ENCODE measurements at regions of chr2 and their contacts with region 1.

Region 1: GRCh38 chr2:12716282-12717190 is at the start of gene TRIB2:
- DNase-seq: peak; percentile 60 to 71
- H3K4me3 ChIP-seq: peak within 1 kb of the TSS; percentile 39
- H3K4me3 Mint-ChIP-seq: peak within 1 kb of the TSS; percentile 71
- H3K27ac Mint-ChIP-seq: no peak within 1 kb of the TSS
- H3K4me1 ChIP-seq: 0 out of 2 replicates have a peak, but pooled peaks cover 5% of the 10 kb centered on the region
- H3K4me1 Mint-ChIP-seq: no peaks in the 10 kb centered on the region
- H3K27me3 ChIP-seq: peaks cover 4% of the 10 kb centered on the region
- H3K27me3 Mint-ChIP-seq: peaks cover 25% of the 10 kb centered on the region
- CTCF ChIP-seq: no peak
- total RNA-seq, gene TRIB2: 2.9 and 3.6 TPM in 2 replicates

Region 2: GRCh38 chr2:10993001-10993481 is 1723.5 kb before region 1 on chr2:
- CTCF ChIA-PET with region 1: no interaction called
- POLR2A ChIA-PET with region 1: no interaction called
- intact Hi-C with region 1: no loop called
- DNase-seq: no peak
- H3K4me3 ChIP-seq: no peak overlapping the region
- H3K4me3 Mint-ChIP-seq: no peak overlapping the region
- H3K27ac Mint-ChIP-seq: no peak overlapping the region
- H3K4me1 ChIP-seq: no peaks in the 10 kb centered on the region
- H3K4me1 Mint-ChIP-seq: no peaks in the 10 kb centered on the region
- H3K27me3 ChIP-seq: no peaks in the 10 kb centered on the region
- H3K27me3 Mint-ChIP-seq: peaks cover 2% of the 10 kb centered on the region
- CTCF ChIP-seq: no peak

Region 3: GRCh38 chr2:12433628-12433994 is 282.9 kb before region 1 on chr2:
- CTCF ChIA-PET with region 1: interaction called, 31 read pairs
- POLR2A ChIA-PET with region 1: no interaction called
- intact Hi-C with region 1: loop called (anchors 1 kb)
- DNase-seq: peak; percentile 41 to 49
- H3K4me3 ChIP-seq: no peak overlapping the region
- H3K4me3 Mint-ChIP-seq: no peak overlapping the region
- H3K27ac Mint-ChIP-seq: no peak overlapping the region
- H3K4me1 ChIP-seq: no peaks in the 10 kb centered on the region
- H3K4me1 Mint-ChIP-seq: no peaks in the 10 kb centered on the region
- H3K27me3 ChIP-seq: no peaks in the 10 kb centered on the region
- H3K27me3 Mint-ChIP-seq: peaks cover 4% of the 10 kb centered on the region
- CTCF ChIP-seq: peak in 1 of 2 experiments; percentile 53

Region 4: GRCh38 chr2:12514631-12515433 is 201.7 kb before region 1 on chr2:
- CTCF ChIA-PET with region 1: interaction called, 5 read pairs
- POLR2A ChIA-PET with region 1: no interaction called
- intact Hi-C with region 1: loop called (anchors 1 kb)
- DNase-seq: peak; percentile 49 to 58
- H3K4me3 ChIP-seq: no peak overlapping the region
- H3K4me3 Mint-ChIP-seq: peak overlapping the region; percentile 20
- H3K27ac Mint-ChIP-seq: no peak overlapping the region
- H3K4me1 ChIP-seq: peaks cover 27% of the 10 kb centered on the region
- H3K4me1 Mint-ChIP-seq: peaks cover 25% of the 10 kb centered on the region
- H3K27me3 ChIP-seq: no peaks in the 10 kb centered on the region
- H3K27me3 Mint-ChIP-seq: peaks cover 5% of the 10 kb centered on the region
- CTCF ChIP-seq: no peak

Region 5: DNA sequence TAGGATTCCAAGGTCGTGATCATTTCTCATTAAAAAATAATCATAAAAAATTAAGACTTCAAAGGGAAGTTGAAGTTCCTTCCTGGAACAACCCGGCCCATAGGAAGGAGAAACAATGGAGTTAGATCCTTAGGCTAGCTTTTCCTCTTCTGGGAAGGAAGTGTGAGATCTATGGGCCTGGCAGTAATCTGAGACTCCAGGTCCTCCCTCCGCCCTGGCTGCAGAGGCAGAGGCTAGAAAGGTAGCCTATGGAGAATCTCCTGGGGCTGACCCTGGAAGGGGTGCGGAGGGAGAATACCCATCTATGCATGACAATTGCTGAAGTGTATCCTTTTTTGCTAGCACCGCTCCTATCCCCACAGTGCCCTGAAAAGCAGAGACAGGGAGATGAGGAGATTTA is 38.1 kb after region 1 on chr2:
- CTCF ChIA-PET with region 1: no interaction called
- POLR2A ChIA-PET with region 1: no interaction called
- intact Hi-C with region 1: no loop called
- DNase-seq: no peak
- H3K4me3 ChIP-seq: no peak overlapping the region
- H3K4me3 Mint-ChIP-seq: no peak overlapping the region
- H3K27ac Mint-ChIP-seq: no peak overlapping the region
- H3K4me1 ChIP-seq: no peaks in the 10 kb centered on the region
- H3K4me1 Mint-ChIP-seq: no peaks in the 10 kb centered on the region
- H3K27me3 ChIP-seq: no peaks in the 10 kb centered on the region
- H3K27me3 Mint-ChIP-seq: peaks cover 2% of the 10 kb centered on the region
- CTCF ChIP-seq: no peak

Region 6: DNA sequence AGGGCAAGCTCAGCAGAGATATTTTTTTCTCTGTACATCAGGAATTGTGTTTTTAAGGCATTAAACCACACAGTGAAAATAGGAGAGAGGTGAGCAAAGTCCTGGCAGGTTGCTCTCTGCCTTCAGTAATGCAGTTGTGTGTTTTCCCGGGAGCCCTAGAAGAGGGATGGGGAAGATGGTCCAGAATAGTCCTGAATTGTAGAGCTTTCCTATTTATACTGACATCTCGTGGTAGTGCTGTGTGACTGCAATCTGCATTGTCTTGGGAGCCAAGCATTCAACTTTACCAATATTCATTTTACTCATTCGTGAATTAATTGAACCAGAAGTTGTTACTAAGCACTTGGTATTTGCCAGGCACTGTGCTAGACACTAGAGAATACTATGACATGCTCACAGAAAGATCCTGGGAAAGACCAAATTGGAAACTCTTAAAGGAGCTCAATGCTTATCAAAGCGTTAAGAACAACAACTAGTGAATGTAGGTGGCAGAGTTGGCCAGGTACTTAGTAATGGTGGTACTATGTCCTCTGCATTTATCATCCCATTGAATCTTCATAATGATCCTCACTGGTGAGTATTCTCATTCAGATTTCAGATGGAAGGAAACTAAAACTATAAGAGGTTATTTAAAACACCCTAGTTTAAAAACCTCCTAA is 214.8 kb after region 1 on chr2:
- CTCF ChIA-PET with region 1: interaction called, 3 read pairs
- POLR2A ChIA-PET with region 1: no interaction called
- intact Hi-C with region 1: loop called (anchors 5 kb)
- DNase-seq: peak in 1 of 2 experiments; percentile 14
- H3K4me3 ChIP-seq: no peak overlapping the region
- H3K4me3 Mint-ChIP-seq: no peak overlapping the region
- H3K27ac Mint-ChIP-seq: no peak overlapping the region
- H3K4me1 ChIP-seq: no peaks in the 10 kb centered on the region; the same call in 1 of the 2 replicates
- H3K4me1 Mint-ChIP-seq: no peaks in the 10 kb centered on the region
- H3K27me3 ChIP-seq: no peaks in the 10 kb centered on the region; the same call in 1 of the 2 replicates
- H3K27me3 Mint-ChIP-seq: peaks cover 3% of the 10 kb centered on the region
- CTCF ChIP-seq: peak; percentile 75 to 78

Region 7: DNA sequence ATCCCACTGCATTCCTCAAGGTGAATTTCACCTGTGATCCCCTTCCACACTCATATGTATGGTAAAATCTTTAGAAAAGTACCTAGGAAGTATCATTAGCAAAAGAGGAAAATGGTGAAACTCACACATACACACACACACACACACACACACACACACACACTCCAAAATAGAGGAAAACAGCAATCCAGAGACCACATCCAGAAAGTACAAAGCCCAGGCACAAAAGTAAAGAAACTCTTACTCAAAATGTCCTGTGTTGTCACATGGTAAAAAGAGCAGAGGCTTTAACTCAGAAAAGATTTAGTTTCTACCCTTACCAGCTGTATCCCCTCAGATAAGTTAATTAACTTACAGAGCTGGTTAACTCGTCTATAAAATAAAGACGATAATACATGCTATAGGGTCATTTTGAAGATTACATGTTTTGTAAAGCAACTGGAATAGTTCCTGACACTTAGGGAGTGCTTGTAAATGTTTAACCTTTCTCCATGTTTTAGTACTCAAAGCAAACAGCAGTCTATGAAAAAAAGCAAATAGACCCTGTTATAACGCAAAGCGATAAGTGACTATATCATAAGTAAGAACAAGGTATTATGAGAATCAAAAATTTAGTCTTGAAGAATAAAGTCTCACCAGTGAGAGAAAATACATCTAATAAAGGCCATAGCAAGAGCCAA is 1556.0 kb after region 1 on chr2:
- CTCF ChIA-PET with region 1: no interaction called
- POLR2A ChIA-PET with region 1: no interaction called
- intact Hi-C with region 1: no loop called
- DNase-seq: no peak
- H3K4me3 ChIP-seq: no peak overlapping the region
- H3K4me3 Mint-ChIP-seq: no peak overlapping the region
- H3K27ac Mint-ChIP-seq: no peak overlapping the region
- H3K4me1 ChIP-seq: peaks cover 11% of the 10 kb centered on the region; the same call in 1 of the 2 replicates
- H3K4me1 Mint-ChIP-seq: no peaks in the 10 kb centered on the region
- H3K27me3 ChIP-seq: no peaks in the 10 kb centered on the region
- H3K27me3 Mint-ChIP-seq: no peaks in the 10 kb centered on the region
- CTCF ChIP-seq: no peak

Measured in Caco-2 (cell line).